AG04450 (cell line): ENCODE measurements at regions of chr1 and their contacts with region 1.

Region 1: DNA sequence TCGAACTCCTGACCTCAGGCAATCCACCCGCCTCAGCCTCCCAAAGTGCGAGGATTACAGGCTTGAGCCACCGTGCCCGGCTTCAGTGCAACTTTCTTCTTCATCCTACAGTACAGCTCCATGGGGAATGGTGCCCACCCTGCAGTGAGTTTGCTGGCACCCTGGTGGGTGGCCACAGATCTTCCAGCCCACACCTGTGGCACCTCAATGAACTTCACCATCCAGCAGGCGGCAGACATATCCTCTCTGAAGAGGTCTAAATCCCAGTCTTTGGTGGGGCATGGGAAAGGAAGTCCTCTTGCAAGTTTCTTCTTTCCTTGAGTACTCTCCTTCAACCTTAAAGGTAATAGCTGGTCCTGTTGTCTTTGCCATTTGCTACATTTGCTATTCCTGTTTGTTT is 18.1 kb upstream of the ZBTB8A start:
- DNase-seq: no peak
- H3K4me3 ChIP-seq: no peak overlapping the region
- H3K27ac ChIP-seq: no peak overlapping the region
- H3K27me3 ChIP-seq: no peaks in the 10 kb centered on the region
- CTCF ChIP-seq: no peak

Region 2: GRCh38 chr1:32448773-32449456 is 72.2 kb before region 1 on chr1:
- CTCF ChIA-PET with region 1: interaction called, 14 read pairs
- POLR2A ChIA-PET with region 1: no interaction called
- DNase-seq: no peak
- H3K4me3 ChIP-seq: no peak overlapping the region
- H3K27ac ChIP-seq: no peak overlapping the region
- H3K27me3 ChIP-seq: no peaks in the 10 kb centered on the region
- CTCF ChIP-seq: 0 out of 2 replicates have a peak, but pooled peaks have one; percentile 15

Region 3: GRCh38 chr1:32509939-32510338 is 11.2 kb before region 1 on chr1:
- CTCF ChIA-PET with region 1: interaction called, 19 read pairs
- POLR2A ChIA-PET with region 1: interaction called, 3 read pairs
- DNase-seq: no peak
- H3K4me3 ChIP-seq: no peak overlapping the region
- H3K27ac ChIP-seq: no peak overlapping the region
- H3K27me3 ChIP-seq: peaks cover 2% of the 10 kb centered on the region
- CTCF ChIP-seq: no peak

Region 4: DNA sequence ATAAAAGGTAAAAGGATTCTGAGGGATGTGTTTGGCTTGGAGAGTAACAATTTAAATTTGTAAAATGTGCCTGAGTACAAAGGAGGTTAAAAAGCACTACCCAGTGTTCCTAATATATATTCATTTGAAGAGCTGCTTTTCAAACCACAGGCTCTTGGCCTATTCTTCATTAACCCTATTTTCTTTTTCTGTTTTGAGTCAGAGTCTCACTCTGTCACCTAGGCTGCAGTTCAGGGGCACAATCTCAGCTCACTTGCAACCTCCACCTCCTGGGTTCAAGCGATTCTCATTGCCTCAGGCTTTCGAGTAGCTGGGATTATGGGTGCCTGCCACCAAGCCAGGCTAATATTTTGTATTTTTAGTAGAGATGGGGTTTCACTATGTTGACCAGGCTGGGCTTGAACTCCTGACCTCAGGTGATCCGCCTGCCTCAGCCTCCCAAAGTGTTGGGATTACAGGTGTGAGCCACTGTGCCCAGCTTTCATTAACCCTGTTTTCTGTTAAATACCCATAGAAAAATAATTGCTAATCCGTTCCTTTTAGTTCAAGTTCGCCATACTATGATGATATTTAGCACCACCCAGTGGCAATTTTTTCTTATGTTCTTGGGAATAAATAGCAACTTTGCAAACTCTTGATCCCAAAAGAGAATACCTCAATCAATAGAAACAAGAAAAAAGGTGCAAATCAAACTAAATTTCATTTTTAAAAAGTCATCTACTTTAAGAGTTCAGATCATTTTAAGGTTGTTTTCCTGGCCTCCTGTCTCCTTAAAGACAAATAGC is 98.7 kb after region 1 on chr1:
- CTCF ChIA-PET with region 1: interaction called, 21 read pairs
- POLR2A ChIA-PET with region 1: no interaction called
- DNase-seq: no peak
- H3K4me3 ChIP-seq: no peak overlapping the region
- H3K27ac ChIP-seq: no peak overlapping the region
- H3K27me3 ChIP-seq: no peaks in the 10 kb centered on the region
- CTCF ChIP-seq: peak; percentile 29

Region 5: GRCh38 chr1:32828341-32828740 is 307.2 kb after region 1 on chr1:
- CTCF ChIA-PET with region 1: interaction called, 12 read pairs
- POLR2A ChIA-PET with region 1: no interaction called
- DNase-seq: no peak
- H3K4me3 ChIP-seq: no peak overlapping the region
- H3K27ac ChIP-seq: no peak overlapping the region
- H3K27me3 ChIP-seq: no peaks in the 10 kb centered on the region
- CTCF ChIP-seq: peak; percentile 21; the same call in 1 of the 2 replicates